ENCODE measurements at regions of chr12 and their contacts with region 1.

Region 1: DNA sequence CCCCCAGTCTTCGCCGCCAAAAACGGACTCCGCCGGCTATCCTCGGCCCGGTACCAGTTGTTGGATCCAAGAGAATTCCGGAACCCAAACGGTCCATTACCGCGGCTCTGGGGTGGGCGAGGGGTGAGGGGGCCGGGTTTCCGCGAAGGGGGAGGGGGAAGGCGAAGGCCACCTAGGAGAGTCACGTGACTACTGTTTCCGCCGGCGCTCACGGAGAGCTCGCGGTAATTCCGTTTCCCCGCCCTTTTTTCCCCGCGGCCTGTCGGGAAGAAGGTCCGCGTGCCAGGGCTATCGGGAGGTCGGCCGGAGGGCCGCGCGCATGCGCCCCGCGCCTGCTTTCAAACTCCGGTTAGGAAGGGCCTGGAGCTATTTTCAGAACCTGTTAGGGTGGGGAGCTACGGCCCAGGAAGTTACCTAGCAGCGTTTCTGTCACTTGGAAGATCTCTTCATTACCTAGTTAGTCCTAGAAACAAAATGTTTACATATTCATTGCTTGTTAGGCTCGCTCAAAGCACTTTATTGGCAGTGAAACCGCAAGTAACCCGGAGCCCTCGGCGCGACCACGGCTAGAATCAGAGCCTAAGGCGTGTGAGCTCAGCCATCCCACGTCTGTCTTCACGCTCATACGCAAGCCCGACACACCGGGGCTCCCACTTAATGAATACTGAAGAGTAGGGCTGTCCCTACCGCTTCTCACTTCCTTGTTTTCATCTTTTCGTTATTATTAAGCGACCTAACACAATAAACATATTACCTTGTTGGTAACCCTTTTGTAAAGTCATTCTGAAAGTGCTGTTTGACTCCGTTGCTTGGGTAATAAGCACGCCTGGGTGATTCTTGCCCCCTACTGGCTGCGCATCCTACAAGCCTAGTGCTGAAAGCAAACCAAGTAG is 624 bp upstream of the SBNO1 start:
- DNase-seq: peak; percentile 99
- H3K4me3 ChIP-seq: peak overlapping the region; percentile 47 to 93 (median 79)
- H3K27ac ChIP-seq: peak overlapping the region; percentile 75
- H3K4me1 ChIP-seq: peaks cover 13% of the 10 kb centered on the region
- H3K27me3 ChIP-seq: no peaks in the 10 kb centered on the region
- CTCF ChIP-seq: peak; percentile 78 to 82
- POLR2A ChIP-seq: peak; percentile 85

Region 2: GRCh38 chr12:123141615-123142517 is 223.4 kb before region 1 on chr12:
- CTCF ChIA-PET with region 1: no interaction called
- POLR2A ChIA-PET with region 1: no interaction called
- dilution Hi-C with region 1: no loop called
- intact Hi-C with region 1: no loop called
- DNase-seq: peak; percentile 72
- H3K4me3 ChIP-seq: peak overlapping the region in 1 of 3 experiments; percentile 6
- H3K27ac ChIP-seq: peak overlapping the region; percentile 34
- H3K4me1 ChIP-seq: peaks cover 29% of the 10 kb centered on the region
- H3K27me3 ChIP-seq: no peaks in the 10 kb centered on the region
- CTCF ChIP-seq: no peak
- POLR2A ChIP-seq: no peak

Region 3: GRCh38 chr12:123271001-123271729 is 94.1 kb before region 1 on chr12:
- CTCF ChIA-PET with region 1: interaction called, 13 read pairs
- POLR2A ChIA-PET with region 1: no interaction called
- dilution Hi-C with region 1: no loop called
- intact Hi-C with region 1: loop called (anchors 2 kb)
- DNase-seq: no peak
- H3K4me3 ChIP-seq: peak overlapping the region; percentile 32 to 90 (median 87)
- H3K27ac ChIP-seq: peak overlapping the region; percentile 83
- H3K4me1 ChIP-seq: peaks cover 26% of the 10 kb centered on the region
- H3K27me3 ChIP-seq: no peaks in the 10 kb centered on the region
- CTCF ChIP-seq: peak; percentile 42 to 57
- POLR2A ChIP-seq: no peak

Region 4: GRCh38 chr12:123278101-123278627 is 87.1 kb before region 1 on chr12:
- CTCF ChIA-PET with region 1: interaction called, 3 read pairs
- POLR2A ChIA-PET with region 1: no interaction called
- dilution Hi-C with region 1: no loop called
- intact Hi-C with region 1: loop called (anchors 2 kb)
- DNase-seq: peak; percentile 87
- H3K4me3 ChIP-seq: peak overlapping the region in 1 of 3 experiments; percentile 28
- H3K27ac ChIP-seq: peak overlapping the region; percentile 68
- H3K4me1 ChIP-seq: peaks cover 11% of the 10 kb centered on the region
- H3K27me3 ChIP-seq: no peaks in the 10 kb centered on the region
- CTCF ChIP-seq: no peak
- POLR2A ChIP-seq: no peak

Region 5: DNA sequence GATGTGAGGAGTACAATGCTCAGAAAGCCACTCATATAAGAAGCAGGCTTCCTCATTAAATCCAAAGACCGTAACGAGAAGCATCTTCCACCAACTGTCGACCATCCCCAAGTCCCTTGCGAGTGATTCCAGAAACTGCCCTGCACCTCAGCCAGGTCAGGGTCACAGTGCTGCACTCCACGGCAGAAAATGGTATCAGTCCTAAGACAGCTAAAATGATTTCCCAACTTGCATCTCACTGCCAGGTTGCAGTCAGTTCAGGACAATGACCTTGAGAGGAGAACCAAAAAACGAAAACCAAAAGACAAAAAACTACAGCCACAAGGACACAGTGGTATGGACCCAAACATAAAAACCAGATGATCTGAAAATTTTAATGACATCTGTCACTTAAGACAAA is 21.2 kb before region 1 on chr12:
- CTCF ChIA-PET with region 1: interaction called, 12 read pairs
- POLR2A ChIA-PET with region 1: no interaction called
- dilution Hi-C with region 1: no loop called
- intact Hi-C with region 1: no loop called
- DNase-seq: no peak
- H3K4me3 ChIP-seq: no peak overlapping the region
- H3K27ac ChIP-seq: no peak overlapping the region
- H3K4me1 ChIP-seq: no peaks in the 10 kb centered on the region
- H3K27me3 ChIP-seq: no peaks in the 10 kb centered on the region
- CTCF ChIP-seq: no peak
- POLR2A ChIP-seq: no peak

Region 6: GRCh38 chr12:123354600-123354999 is 10.7 kb before region 1 on chr12:
- CTCF ChIA-PET with region 1: interaction called, 15 read pairs
- POLR2A ChIA-PET with region 1: no interaction called
- dilution Hi-C with region 1: no loop called
- intact Hi-C with region 1: no loop called
- DNase-seq: no peak
- H3K4me3 ChIP-seq: no peak overlapping the region
- H3K27ac ChIP-seq: no peak overlapping the region
- H3K4me1 ChIP-seq: no peaks in the 10 kb centered on the region
- H3K27me3 ChIP-seq: no peaks in the 10 kb centered on the region
- CTCF ChIP-seq: no peak
- POLR2A ChIP-seq: no peak

Region 7: GRCh38 chr12:123388177-123388947 is 23.1 kb after region 1 on chr12:
- CTCF ChIA-PET with region 1: interaction called, 51 read pairs
- POLR2A ChIA-PET with region 1: interaction called, 12 read pairs
- dilution Hi-C with region 1: no loop called
- intact Hi-C with region 1: loop called (anchors 1 kb)
- DNase-seq: peak; percentile 61
- H3K4me3 ChIP-seq: peak overlapping the region in 2 of 3 experiments; percentile 33 to 46
- H3K27ac ChIP-seq: peak overlapping the region; percentile 39
- H3K4me1 ChIP-seq: peaks cover 36% of the 10 kb centered on the region
- H3K27me3 ChIP-seq: no peaks in the 10 kb centered on the region
- CTCF ChIP-seq: no peak
- POLR2A ChIP-seq: peak; percentile 55

Region 8: DNA sequence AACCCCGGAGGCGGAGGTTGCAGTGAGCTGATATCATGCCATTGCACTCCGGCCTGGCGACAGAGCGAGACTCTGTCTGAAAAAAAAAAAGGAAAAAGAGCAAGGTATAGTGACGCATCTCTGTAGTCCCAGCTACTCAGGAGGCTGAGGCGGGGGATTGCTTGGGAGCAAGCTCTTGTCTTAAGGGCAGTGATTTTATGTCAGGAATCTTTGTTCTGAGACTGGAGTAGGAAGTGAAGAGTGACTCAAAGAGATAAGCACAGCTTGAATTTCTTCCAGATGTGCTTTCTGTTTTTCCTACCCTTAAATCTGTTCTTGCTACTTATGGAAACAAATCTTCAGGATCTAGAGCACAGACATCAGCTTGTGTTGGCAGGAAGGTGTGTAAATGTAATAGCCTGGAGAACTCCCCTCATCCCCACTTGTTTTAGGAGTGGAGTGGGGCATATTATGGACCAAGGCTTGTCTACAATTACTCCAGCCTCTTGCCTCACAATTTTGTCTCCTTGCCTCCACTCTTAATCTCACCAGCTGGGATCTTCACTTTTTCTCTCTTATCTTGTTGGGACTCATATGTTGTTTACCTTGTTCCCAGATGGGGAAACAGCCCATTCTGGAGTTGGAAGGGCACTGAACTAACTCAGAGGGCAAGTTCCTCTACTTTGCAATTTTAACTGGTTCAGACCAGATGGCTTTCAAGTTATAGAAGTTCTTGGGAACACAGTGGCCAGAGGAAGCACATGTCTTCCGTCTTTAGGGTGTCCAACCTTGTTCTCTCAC is 226.6 kb after region 1 on chr12:
- CTCF ChIA-PET with region 1: no interaction called
- POLR2A ChIA-PET with region 1: no interaction called
- dilution Hi-C with region 1: no loop called
- intact Hi-C with region 1: no loop called
- DNase-seq: peak; percentile 43
- H3K4me3 ChIP-seq: no peak overlapping the region
- H3K27ac ChIP-seq: peak overlapping the region; percentile 24
- H3K4me1 ChIP-seq: peaks cover 30% of the 10 kb centered on the region
- H3K27me3 ChIP-seq: no peaks in the 10 kb centered on the region
- CTCF ChIP-seq: no peak
- POLR2A ChIP-seq: no peak

Measured in endothelial cell of umbilical vein (primary cell).